B cell (primary cell): ENCODE measurements at regions of chr1 and their contacts with region 1.

Region 1: DNA sequence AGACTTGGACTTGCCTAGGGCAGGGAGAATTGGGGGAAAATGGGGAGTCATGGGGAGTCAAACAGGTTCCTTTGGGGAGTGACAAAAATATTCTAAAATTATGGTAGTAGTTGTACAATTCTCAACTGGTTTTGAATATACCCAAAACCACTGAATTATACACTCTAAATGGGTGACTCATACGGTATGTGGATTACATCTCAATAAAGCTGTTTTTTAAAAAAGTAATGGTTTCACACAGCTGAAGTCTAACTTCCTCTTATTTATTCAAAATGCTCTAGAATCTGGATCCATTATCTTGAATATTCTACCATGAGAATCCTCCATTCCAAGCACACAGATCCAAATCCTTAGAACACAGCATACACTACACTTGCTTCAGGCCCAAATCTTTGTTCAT is 11.1 kb downstream of the EIF4G3 start:
- DNase-seq: peak; percentile 29
- ATAC-seq: peak; percentile 57
- H3K4me3 ChIP-seq: no peak overlapping the region
- H3K4me3 Mint-ChIP-seq: peak overlapping the region; percentile 51
- H3K27ac ChIP-seq: peak overlapping the region; percentile 5 to 23
- H3K27ac Mint-ChIP-seq: peak overlapping the region; percentile 77
- H3K4me1 ChIP-seq: peaks cover 7 to 8% of the 10 kb centered on the region in 2 donors
- H3K4me1 Mint-ChIP-seq: peaks cover 18% of the 10 kb centered on the region
- H3K27me3 ChIP-seq: no peaks in the 10 kb centered on the region
- H3K27me3 Mint-ChIP-seq: no peaks in the 10 kb centered on the region
- CTCF ChIP-seq: no peak

Region 2: DNA sequence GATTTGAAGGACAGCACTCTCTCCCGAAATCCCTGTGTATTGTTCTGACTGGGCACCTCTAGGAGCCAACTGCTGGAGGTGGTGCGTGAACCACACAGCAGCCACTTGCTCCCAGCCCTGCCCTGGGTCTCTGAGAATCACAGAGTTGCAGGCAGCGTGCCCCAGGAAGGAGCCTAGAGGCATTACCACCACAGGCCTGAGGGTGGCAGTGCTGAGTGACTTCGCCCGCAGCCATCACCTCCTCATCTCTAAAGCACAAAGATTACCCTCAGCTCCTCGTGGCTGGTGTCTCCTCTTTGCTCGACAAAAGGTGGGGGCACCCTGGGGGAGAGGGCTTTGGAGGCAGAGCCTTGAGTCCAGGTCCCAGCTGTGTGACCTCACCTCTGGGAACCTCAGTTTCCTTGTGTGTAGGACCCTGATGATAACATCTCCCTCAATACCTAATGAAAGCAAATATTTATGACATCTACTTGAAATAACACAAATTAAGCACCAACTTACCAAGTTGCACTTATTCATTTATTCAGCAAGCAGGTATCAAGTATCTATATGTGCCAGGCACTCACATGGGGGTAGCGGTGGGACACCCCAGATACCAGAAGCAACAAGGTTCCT is 788.7 kb before region 1 on chr1:
- CTCF ChIA-PET with region 1: no interaction called
- POLR2A ChIA-PET with region 1: interaction called, 13 read pairs
- intact Hi-C with region 1: no loop called
- DNase-seq: peak; percentile 61
- ATAC-seq: peak; percentile 84
- H3K4me3 ChIP-seq: no peak overlapping the region
- H3K4me3 Mint-ChIP-seq: no peak overlapping the region
- H3K27ac ChIP-seq: no peak overlapping the region
- H3K27ac Mint-ChIP-seq: no peak overlapping the region
- H3K4me1 ChIP-seq: peaks cover 0 to 15% of the 10 kb centered on the region in 2 donors
- H3K4me1 Mint-ChIP-seq: peaks cover 23% of the 10 kb centered on the region
- H3K27me3 ChIP-seq: peaks cover 0 to under 1% (median 0%) of the 10 kb centered on the region in 4 experiments
- H3K27me3 Mint-ChIP-seq: peaks cover 33% of the 10 kb centered on the region
- CTCF ChIP-seq: peak; percentile 71

Region 3: GRCh38 chr1:21117597-21118001 is 48.0 kb before region 1 on chr1:
- CTCF ChIA-PET with region 1: no interaction called
- POLR2A ChIA-PET with region 1: no interaction called
- intact Hi-C with region 1: loop called (anchors 10 kb)
- DNase-seq: no peak
- ATAC-seq: no peak
- H3K4me3 ChIP-seq: no peak overlapping the region
- H3K4me3 Mint-ChIP-seq: no peak overlapping the region
- H3K27ac ChIP-seq: no peak overlapping the region
- H3K27ac Mint-ChIP-seq: no peak overlapping the region
- H3K4me1 ChIP-seq: peaks cover 5 to 8% of the 10 kb centered on the region in 2 donors
- H3K4me1 Mint-ChIP-seq: peaks cover 8% of the 10 kb centered on the region
- H3K27me3 ChIP-seq: no peaks in the 10 kb centered on the region
- H3K27me3 Mint-ChIP-seq: no peaks in the 10 kb centered on the region
- CTCF ChIP-seq: no peak

Region 4: GRCh38 chr1:21184276-21184675 is 18.6 kb after region 1 on chr1:
- CTCF ChIA-PET with region 1: no interaction called
- POLR2A ChIA-PET with region 1: no interaction called
- intact Hi-C with region 1: no loop called
- DNase-seq: peak; percentile 70
- ATAC-seq: peak; percentile 91
- H3K4me3 ChIP-seq: no peak overlapping the region
- H3K4me3 Mint-ChIP-seq: peak overlapping the region; percentile 59
- H3K27ac ChIP-seq: peak overlapping the region; percentile 30 to 77
- H3K27ac Mint-ChIP-seq: peak overlapping the region; percentile 87
- H3K4me1 ChIP-seq: peaks cover 33 to 37% of the 10 kb centered on the region in 2 donors
- H3K4me1 Mint-ChIP-seq: peaks cover 23% of the 10 kb centered on the region
- H3K27me3 ChIP-seq: no peaks in the 10 kb centered on the region
- H3K27me3 Mint-ChIP-seq: no peaks in the 10 kb centered on the region
- CTCF ChIP-seq: no peak

Region 5: DNA sequence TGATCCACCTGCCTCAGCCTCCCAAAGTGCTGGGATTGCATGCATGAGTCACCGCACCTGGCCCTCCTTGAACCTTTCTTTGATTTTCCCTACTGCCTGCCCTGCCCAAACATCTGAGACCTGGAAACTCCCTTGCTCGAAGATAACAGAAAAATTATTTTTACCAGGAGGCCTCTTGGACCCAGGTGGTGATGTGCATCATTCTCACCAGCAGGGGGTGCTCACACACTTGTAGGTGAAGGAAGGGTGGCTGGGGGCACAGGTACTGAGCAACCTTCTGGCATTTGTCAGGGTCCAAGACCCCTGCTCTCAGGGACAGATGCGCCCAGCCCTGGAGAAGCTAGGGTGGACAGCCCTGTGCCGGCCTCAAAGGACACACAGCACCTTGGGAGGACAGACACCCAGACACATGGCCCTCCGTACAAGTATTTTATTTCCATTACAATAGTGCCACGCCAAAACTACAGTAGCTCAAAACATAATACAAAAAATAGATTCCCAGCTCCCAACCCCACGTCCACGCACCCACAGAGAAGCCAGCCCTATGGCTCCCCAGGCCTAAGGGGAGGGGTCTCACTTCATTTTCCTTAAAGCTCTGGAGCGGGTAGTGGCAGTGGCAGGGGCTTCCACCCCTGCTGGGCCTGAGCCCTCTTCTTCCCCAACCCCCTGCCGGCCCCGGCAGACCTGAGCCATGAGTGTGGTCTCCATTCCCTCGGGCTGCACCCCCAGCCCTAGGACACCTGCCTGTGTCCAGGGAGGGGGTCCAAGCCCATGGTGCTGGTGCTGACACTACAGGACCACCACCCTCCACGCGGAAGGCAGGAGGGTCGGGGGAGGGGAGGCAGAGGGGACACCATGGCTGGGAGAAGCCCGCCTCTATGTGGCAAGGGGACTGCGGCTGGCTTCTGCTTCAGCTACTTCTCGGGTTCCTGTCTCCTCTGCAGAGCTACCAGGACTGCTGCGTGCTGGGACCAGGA is 51.5 kb after region 1 on chr1:
- CTCF ChIA-PET with region 1: no interaction called
- POLR2A ChIA-PET with region 1: no interaction called
- intact Hi-C with region 1: no loop called
- DNase-seq: peak; percentile 76
- ATAC-seq: peak; percentile 74
- H3K4me3 ChIP-seq: no peak overlapping the region
- H3K4me3 Mint-ChIP-seq: no peak overlapping the region
- H3K27ac ChIP-seq: peak overlapping the region in 1 of 2 donors; percentile 9
- H3K27ac Mint-ChIP-seq: no peak overlapping the region
- H3K4me1 ChIP-seq: no peaks in the 10 kb centered on the region
- H3K4me1 Mint-ChIP-seq: peaks cover 5% of the 10 kb centered on the region
- H3K27me3 ChIP-seq: no peaks in the 10 kb centered on the region
- H3K27me3 Mint-ChIP-seq: no peaks in the 10 kb centered on the region
- CTCF ChIP-seq: peak; percentile 78

Region 6: GRCh38 chr1:21238141-21238800 is 72.6 kb after region 1 on chr1:
- CTCF ChIA-PET with region 1: no interaction called
- POLR2A ChIA-PET with region 1: no interaction called
- intact Hi-C with region 1: no loop called
- DNase-seq: no peak
- ATAC-seq: no peak
- H3K4me3 ChIP-seq: no peak overlapping the region
- H3K4me3 Mint-ChIP-seq: no peak overlapping the region
- H3K27ac ChIP-seq: no peak overlapping the region
- H3K27ac Mint-ChIP-seq: no peak overlapping the region
- H3K4me1 ChIP-seq: no peaks in the 10 kb centered on the region
- H3K4me1 Mint-ChIP-seq: no peaks in the 10 kb centered on the region
- H3K27me3 ChIP-seq: no peaks in the 10 kb centered on the region
- H3K27me3 Mint-ChIP-seq: no peaks in the 10 kb centered on the region
- CTCF ChIP-seq: no peak

Region 7: GRCh38 chr1:21255278-21255942 is 89.8 kb after region 1 on chr1:
- CTCF ChIA-PET with region 1: no interaction called
- POLR2A ChIA-PET with region 1: no interaction called
- intact Hi-C with region 1: no loop called
- DNase-seq: peak; percentile 85
- ATAC-seq: peak; percentile 77
- H3K4me3 ChIP-seq: no peak overlapping the region
- H3K4me3 Mint-ChIP-seq: no peak overlapping the region
- H3K27ac ChIP-seq: no peak overlapping the region
- H3K27ac Mint-ChIP-seq: peak overlapping the region; percentile 79
- H3K4me1 ChIP-seq: peaks cover 9 to 19% of the 10 kb centered on the region in 2 donors
- H3K4me1 Mint-ChIP-seq: peaks cover 20% of the 10 kb centered on the region
- H3K27me3 ChIP-seq: no peaks in the 10 kb centered on the region
- H3K27me3 Mint-ChIP-seq: no peaks in the 10 kb centered on the region
- CTCF ChIP-seq: peak; percentile 82